OCI-LY7 (cell line): ENCODE measurements at regions of chr5 and their contacts with region 1.

Region 1: GRCh38 chr5:54194318-54194717 is 116.1 kb downstream of the ARL15 start:
- DNase-seq: no peak
- H3K4me3 ChIP-seq: no peak overlapping the region
- H3K27ac ChIP-seq: no peak overlapping the region
- H3K4me1 ChIP-seq: peaks cover 10% of the 10 kb centered on the region
- CTCF ChIP-seq: no peak

Region 2: GRCh38 chr5:53892224-53892623 is 302.1 kb before region 1 on chr5:
- CTCF ChIA-PET with region 1: no interaction called
- POLR2A ChIA-PET with region 1: no interaction called
- intact Hi-C with region 1: no loop called
- DNase-seq: no peak
- H3K4me3 ChIP-seq: no peak overlapping the region
- H3K27ac ChIP-seq: no peak overlapping the region
- H3K4me1 ChIP-seq: no peaks in the 10 kb centered on the region
- CTCF ChIP-seq: no peak

Region 3: DNA sequence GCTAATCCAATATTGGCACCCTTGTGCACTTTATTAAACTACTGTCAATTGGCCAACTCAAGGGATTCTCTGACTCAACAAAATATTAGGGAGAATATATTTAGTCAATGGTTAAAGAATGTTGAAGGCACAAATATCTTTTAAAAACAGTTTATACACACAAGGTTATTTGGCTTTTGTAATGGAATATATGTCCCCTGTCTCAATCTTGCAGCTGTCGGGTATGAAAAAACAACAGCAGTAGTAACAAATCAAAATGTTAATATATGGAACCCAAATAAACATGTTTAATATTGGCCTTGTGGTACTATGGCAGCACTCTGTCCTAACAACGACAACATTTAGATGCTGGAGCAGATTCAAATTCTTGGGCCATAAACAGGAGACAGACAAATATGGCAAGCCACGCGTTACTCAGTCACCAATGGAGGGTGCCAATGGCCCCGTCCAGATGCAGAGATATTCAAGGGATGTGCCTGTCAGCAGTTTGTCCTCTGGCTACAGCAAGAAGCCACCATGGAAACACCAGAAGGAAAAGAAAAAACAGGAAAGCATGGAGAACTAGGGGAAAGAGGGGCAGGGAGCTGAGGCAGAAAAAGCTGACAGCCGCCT is 291.9 kb before region 1 on chr5:
- CTCF ChIA-PET with region 1: no interaction called
- POLR2A ChIA-PET with region 1: no interaction called
- intact Hi-C with region 1: no loop called
- DNase-seq: no peak
- H3K4me3 ChIP-seq: no peak overlapping the region
- H3K27ac ChIP-seq: no peak overlapping the region
- H3K4me1 ChIP-seq: no peaks in the 10 kb centered on the region
- CTCF ChIP-seq: no peak

Region 4: GRCh38 chr5:54171645-54172384 is 22.5 kb before region 1 on chr5:
- CTCF ChIA-PET with region 1: no interaction called
- POLR2A ChIA-PET with region 1: interaction called, 13 read pairs
- intact Hi-C with region 1: no loop called
- DNase-seq: peak; percentile 78
- H3K4me3 ChIP-seq: peak overlapping the region; percentile 56
- H3K27ac ChIP-seq: peak overlapping the region; percentile 88
- H3K4me1 ChIP-seq: peaks cover 62% of the 10 kb centered on the region
- CTCF ChIP-seq: no peak

Region 5: GRCh38 chr5:54178207-54178606 is 16.1 kb before region 1 on chr5:
- CTCF ChIA-PET with region 1: no interaction called
- POLR2A ChIA-PET with region 1: interaction called, 10 read pairs
- intact Hi-C with region 1: no loop called
- DNase-seq: no peak
- H3K4me3 ChIP-seq: no peak overlapping the region
- H3K27ac ChIP-seq: no peak overlapping the region
- H3K4me1 ChIP-seq: peaks cover 21% of the 10 kb centered on the region
- CTCF ChIP-seq: no peak

Region 6: GRCh38 chr5:54590824-54591223 is 396.5 kb after region 1 on chr5:
- CTCF ChIA-PET with region 1: no interaction called
- POLR2A ChIA-PET with region 1: no interaction called
- intact Hi-C with region 1: no loop called
- DNase-seq: no peak
- H3K4me3 ChIP-seq: no peak overlapping the region
- H3K27ac ChIP-seq: no peak overlapping the region
- H3K4me1 ChIP-seq: no peaks in the 10 kb centered on the region
- CTCF ChIP-seq: no peak

Region 7: GRCh38 chr5:54610197-54610944 is 416.1 kb after region 1 on chr5:
- CTCF ChIA-PET with region 1: no interaction called
- POLR2A ChIA-PET with region 1: no interaction called
- intact Hi-C with region 1: no loop called
- DNase-seq: peak; percentile 63
- H3K4me3 ChIP-seq: no peak overlapping the region
- H3K27ac ChIP-seq: peak overlapping the region; percentile 7
- H3K4me1 ChIP-seq: peaks cover 17% of the 10 kb centered on the region
- CTCF ChIP-seq: no peak